Endothelial cell of umbilical vein (primary cell): ENCODE measurements at regions of chr15 and their contacts with region 1.

Region 1: GRCh38 chr15:48861813-48862431 is 16.0 kb upstream of the EID1 start:
- DNase-seq: peak; percentile 58
- H3K4me3 ChIP-seq: no peak overlapping the region
- H3K27ac ChIP-seq: no peak overlapping the region
- H3K4me1 ChIP-seq: no peaks in the 10 kb centered on the region
- H3K27me3 ChIP-seq: no peaks in the 10 kb centered on the region
- CTCF ChIP-seq: peak; percentile 51 to 57
- POLR2A ChIP-seq: no peak

Region 2: DNA sequence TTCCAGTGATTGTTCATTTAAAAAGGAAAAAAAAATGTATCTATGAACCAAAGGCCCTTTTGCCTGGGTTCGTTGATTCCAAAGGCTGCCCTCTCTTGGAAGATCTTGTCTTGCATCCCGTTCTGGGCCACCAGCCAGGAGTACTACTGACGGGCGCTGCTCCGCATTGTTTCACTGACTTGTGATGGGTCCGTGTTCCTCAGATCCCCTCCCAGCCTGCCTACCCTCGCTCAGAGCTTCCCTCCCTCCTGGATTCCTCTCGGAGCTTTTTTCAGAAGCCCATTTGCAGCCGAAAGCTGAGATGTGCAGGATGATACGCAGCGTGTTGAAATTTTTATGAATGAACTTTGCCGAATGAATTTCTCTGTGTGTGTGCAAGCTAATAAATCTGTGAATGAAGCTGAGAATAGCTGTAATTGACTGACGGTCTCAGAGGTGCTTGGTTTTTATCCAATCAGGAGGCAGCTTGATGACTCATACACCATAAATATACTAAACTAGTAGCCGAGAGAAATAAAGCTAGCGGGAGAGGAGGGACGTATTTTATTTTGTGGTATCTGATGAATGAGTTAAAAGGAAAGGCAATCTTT is 101.7 kb after region 1 on chr15 and contains the start of gene SHC4:
- CTCF ChIA-PET with region 1: interaction called, 43 read pairs
- POLR2A ChIA-PET with region 1: no interaction called
- dilution Hi-C with region 1: no loop called
- intact Hi-C with region 1: no loop called
- DNase-seq: peak; percentile 89
- H3K4me3 ChIP-seq: peak within 1 kb of the TSS; percentile 17 to 76 (median 40)
- H3K27ac ChIP-seq: no peak within 1 kb of the TSS
- H3K4me1 ChIP-seq: peaks cover 8% of the 10 kb centered on the region
- H3K27me3 ChIP-seq: peaks cover 13 to 21% of the 10 kb centered on the region in 2 experiments
- CTCF ChIP-seq: no peak
- POLR2A ChIP-seq: no peak
- total RNA-seq, gene SHC4: 0.20 TPM in 1 of 2 replicates, not detected in the other

Region 3: GRCh38 chr15:49145651-49146609 is 284.0 kb after region 1 on chr15:
- CTCF ChIA-PET with region 1: interaction called, 181 read pairs
- POLR2A ChIA-PET with region 1: no interaction called
- dilution Hi-C with region 1: no loop called
- intact Hi-C with region 1: loop called (anchors 1 kb)
- DNase-seq: peak; percentile 90
- H3K4me3 ChIP-seq: peak overlapping the region in 1 of 3 experiments; percentile 17
- H3K27ac ChIP-seq: peak overlapping the region; percentile 31
- H3K4me1 ChIP-seq: peaks cover 10% of the 10 kb centered on the region
- H3K27me3 ChIP-seq: no peaks in the 10 kb centered on the region
- CTCF ChIP-seq: peak; percentile 53 to 59
- POLR2A ChIP-seq: no peak

Region 4: GRCh38 chr15:49235446-49236124 is 373.7 kb after region 1 on chr15:
- CTCF ChIA-PET with region 1: interaction called, 31 read pairs
- POLR2A ChIA-PET with region 1: no interaction called
- dilution Hi-C with region 1: no loop called
- intact Hi-C with region 1: loop called (anchors 2 kb)
- DNase-seq: peak; percentile 92
- H3K4me3 ChIP-seq: no peak overlapping the region
- H3K27ac ChIP-seq: no peak overlapping the region
- H3K4me1 ChIP-seq: peaks cover 7% of the 10 kb centered on the region
- H3K27me3 ChIP-seq: no peaks in the 10 kb centered on the region
- CTCF ChIP-seq: peak; percentile 63 to 67
- POLR2A ChIP-seq: no peak

Region 5: DNA sequence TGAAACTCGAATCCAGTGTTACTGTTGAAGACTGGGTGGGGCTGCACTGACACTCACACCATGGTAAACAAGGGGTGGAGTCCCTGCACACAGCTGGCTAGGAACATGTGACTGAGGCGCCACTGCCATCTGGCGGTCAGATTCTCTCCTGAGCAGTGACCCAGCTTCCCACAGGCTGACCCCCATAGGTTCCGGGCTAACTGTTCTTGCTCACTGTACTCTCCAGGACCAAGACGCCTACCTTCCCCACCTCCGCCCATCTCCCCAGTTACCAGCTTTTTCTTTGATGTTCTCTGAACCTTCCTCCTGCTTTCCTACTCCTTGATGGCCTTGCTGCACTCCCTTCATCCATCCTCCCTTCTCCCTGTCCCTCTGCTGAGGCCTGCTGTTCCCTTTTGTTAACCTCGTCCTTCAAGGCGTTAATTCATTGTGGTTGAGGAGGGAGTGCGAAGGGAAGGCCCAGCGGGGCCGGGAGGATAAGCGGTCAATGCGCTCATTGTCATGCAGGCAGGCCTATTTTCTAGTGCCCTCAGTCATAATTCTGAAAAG is 1141.9 kb after region 1 on chr15:
- CTCF ChIA-PET with region 1: interaction called, 14 read pairs
- POLR2A ChIA-PET with region 1: no interaction called
- dilution Hi-C with region 1: no loop called
- intact Hi-C with region 1: loop called (anchors 1 kb)
- DNase-seq: peak; percentile 63
- H3K4me3 ChIP-seq: no peak overlapping the region
- H3K27ac ChIP-seq: no peak overlapping the region
- H3K4me1 ChIP-seq: no peaks in the 10 kb centered on the region
- H3K27me3 ChIP-seq: peaks cover 0 to 28% of the 10 kb centered on the region in 2 experiments
- CTCF ChIP-seq: peak; percentile 74 to 75
- POLR2A ChIP-seq: no peak